OCI-LY7 (cell line): ENCODE measurements at regions of chr16 and their contacts with region 1.

Region 1: DNA sequence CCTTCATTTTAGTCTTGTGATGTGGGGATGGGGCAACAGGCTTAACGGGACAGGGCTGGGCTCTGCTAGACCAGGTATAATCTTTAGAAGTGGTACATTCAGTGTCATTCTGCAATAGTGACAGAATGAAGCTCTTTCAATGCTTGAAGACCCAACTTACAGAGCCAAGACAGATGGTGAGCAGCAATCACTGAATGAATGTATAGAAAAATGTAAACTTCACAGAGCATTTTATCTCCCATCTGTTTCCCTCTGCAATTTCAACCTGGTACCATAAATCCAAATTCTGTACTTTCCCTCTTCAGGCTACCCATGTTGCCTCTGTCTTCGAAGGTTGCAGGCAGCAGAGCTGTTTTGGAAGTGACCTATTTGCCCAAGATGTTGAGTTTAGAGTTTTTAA is 33.5 kb upstream of the GOT2 start:
- DNase-seq: no peak
- H3K4me3 ChIP-seq: no peak overlapping the region
- H3K27ac ChIP-seq: no peak overlapping the region
- H3K4me1 ChIP-seq: no peaks in the 10 kb centered on the region
- CTCF ChIP-seq: no peak

Region 2: DNA sequence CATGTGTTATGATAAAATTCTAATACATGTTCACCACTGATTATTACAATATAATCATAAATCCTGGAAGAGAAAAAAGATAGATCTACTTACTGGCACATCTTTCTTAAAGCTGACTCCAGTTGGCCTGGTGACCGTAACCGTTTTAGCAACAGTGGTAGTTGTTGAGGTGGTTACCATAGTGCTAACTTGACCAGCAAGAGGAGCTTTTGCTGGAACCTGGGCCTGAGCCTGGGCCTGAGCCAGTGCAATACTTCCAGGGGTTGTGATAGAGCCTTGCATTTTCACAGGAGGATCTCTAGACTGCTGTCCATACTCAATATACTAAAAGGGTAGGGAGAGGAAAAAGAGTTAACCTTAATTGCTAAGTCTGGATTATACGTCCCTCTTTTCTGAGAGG is 216.1 kb before region 1 on chr16:
- CTCF ChIA-PET with region 1: no interaction called
- POLR2A ChIA-PET with region 1: no interaction called
- intact Hi-C with region 1: no loop called
- DNase-seq: no peak
- H3K4me3 ChIP-seq: no peak overlapping the region
- H3K27ac ChIP-seq: no peak overlapping the region
- H3K4me1 ChIP-seq: no peaks in the 10 kb centered on the region
- CTCF ChIP-seq: no peak

Region 3: DNA sequence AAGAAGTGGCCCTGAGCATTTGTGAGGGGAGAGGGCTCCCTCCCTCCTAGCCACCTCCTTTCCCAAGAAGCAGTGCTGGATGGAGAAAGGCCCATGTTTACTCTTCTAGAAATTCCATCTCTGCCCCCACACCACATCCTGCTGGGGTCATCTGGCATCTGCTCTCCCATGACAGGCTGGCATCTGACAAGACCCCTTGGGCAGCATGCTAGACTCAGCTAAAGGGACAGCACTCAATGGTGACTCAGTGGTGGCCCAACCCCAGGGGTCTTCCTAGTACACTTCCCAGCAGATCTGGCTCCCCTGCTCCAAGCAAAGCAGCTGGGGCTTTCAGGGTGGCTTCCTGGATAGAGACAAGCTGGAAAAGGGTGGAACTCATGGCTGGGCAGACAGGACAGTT is 97.4 kb before region 1 on chr16:
- CTCF ChIA-PET with region 1: no interaction called
- POLR2A ChIA-PET with region 1: interaction called, 11 read pairs
- intact Hi-C with region 1: no loop called
- DNase-seq: no peak
- H3K4me3 ChIP-seq: no peak overlapping the region
- H3K27ac ChIP-seq: no peak overlapping the region
- H3K4me1 ChIP-seq: no peaks in the 10 kb centered on the region
- CTCF ChIP-seq: no peak

Region 4: GRCh38 chr16:58741166-58741565 is 26.4 kb before region 1 on chr16:
- CTCF ChIA-PET with region 1: no interaction called
- POLR2A ChIA-PET with region 1: no interaction called
- intact Hi-C with region 1: no loop called
- DNase-seq: no peak
- H3K4me3 ChIP-seq: no peak overlapping the region
- H3K27ac ChIP-seq: no peak overlapping the region
- H3K4me1 ChIP-seq: no peaks in the 10 kb centered on the region
- CTCF ChIP-seq: no peak

Region 5: GRCh38 chr16:58820411-58820810 is 52.8 kb after region 1 on chr16:
- CTCF ChIA-PET with region 1: no interaction called
- POLR2A ChIA-PET with region 1: no interaction called
- intact Hi-C with region 1: no loop called
- DNase-seq: no peak
- H3K4me3 ChIP-seq: no peak overlapping the region
- H3K27ac ChIP-seq: no peak overlapping the region
- H3K4me1 ChIP-seq: no peaks in the 10 kb centered on the region
- CTCF ChIP-seq: no peak

Region 6: DNA sequence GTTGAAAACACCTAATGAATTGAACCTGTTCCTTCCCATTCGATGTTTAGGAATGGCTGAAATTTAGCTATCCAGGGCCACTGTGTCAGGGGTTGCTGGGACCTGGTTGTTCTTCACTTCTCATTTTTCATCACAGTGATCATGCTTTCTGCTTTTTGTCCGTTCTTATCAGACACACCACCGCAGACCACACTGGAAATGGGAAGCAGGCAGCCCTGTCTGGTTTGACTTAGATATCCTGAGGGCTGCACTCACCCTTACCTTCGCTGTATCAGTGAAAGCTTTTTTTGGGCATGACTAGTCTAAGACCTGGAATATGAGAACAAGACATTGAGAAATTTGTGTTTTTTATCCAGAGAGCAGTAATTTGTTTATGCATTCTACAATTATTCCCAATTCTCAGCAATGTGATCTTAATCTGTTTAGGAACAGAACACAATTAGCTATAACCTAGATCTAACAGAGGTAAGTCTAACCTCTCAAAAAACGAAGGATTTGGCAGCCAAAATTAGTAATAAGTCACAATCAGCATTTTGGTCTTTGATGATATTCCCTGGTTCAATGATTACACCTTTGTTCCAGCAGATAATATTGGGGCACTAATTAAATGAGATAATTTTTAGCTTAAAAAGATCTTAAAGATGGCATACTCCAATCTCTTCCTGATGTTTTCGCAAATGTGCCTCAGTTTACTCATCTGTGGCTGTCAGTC is 92.5 kb after region 1 on chr16:
- CTCF ChIA-PET with region 1: no interaction called
- POLR2A ChIA-PET with region 1: no interaction called
- intact Hi-C with region 1: no loop called
- DNase-seq: no peak
- H3K4me3 ChIP-seq: no peak overlapping the region
- H3K27ac ChIP-seq: no peak overlapping the region
- H3K4me1 ChIP-seq: no peaks in the 10 kb centered on the region
- CTCF ChIP-seq: no peak